Sigmoid colon (tissue), 7 donors: ENCODE measurements at regions of chrX and their contacts with region 1.

Region 1: DNA sequence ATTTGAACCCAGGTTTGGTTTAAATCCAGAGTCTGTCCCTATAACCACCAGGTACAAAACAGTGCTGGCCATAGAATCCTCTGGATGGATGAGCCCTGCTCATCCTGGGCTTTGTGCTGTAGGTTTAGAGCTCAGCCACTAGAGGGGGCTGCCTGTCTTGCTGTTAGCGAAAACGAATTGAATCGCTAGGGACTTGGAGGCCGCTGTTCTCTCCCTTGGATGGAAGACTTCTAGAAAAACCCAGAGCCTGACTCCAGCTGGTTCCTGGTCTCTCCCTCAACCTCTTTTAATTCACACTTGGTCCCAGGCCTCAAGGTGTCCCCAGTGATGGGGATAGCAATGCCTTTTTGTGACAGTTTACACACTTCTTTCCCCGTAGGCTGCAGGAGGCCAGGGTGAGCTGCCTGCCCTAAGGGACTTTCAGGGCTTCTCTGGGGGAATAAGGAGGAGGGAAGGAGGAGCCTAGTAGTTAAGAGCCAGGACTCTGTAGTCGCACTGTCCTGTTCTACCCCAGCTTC is 8.7 kb downstream of the RIPPLY1 start:
- DNase-seq: peak; percentile 78
- H3K4me3 ChIP-seq: no peak overlapping the region
- H3K27ac ChIP-seq: no peak overlapping the region
- H3K4me1 ChIP-seq: peaks cover 0 to 3% (median 0%) of the 10 kb centered on the region in 4 donors
- H3K27me3 ChIP-seq: no peaks in the 10 kb centered on the region
- CTCF ChIP-seq: peak; percentile 30 to 62 (median 48)
- EP300 ChIP-seq: no peak
- POLR2A ChIP-seq: no peak

Region 2: DNA sequence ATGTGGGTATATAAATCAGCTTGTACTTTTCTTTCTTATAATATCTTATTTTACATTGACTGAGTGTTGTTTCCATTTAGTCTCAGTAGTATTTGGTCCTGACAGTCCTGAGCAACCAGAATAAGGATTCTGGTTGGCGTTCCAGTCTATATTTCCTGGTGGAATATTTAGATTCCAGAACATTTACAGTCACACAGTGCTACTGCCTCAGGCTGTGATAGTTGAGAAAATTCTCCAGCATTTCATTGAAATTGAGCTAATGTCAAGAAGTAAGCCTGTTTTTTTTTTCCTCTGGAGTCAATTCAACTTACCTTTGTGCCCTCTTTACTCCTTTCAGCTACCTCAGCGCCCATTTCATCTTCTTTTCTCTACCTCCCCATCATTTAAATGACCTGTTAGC is 993.6 kb before region 1 on chrX:
- intact Hi-C with region 1: no loop called
- DNase-seq: no peak
- H3K4me3 ChIP-seq: no peak overlapping the region
- H3K27ac ChIP-seq: no peak overlapping the region
- H3K4me1 ChIP-seq: no peaks in the 10 kb centered on the region
- H3K27me3 ChIP-seq: no peaks in the 10 kb centered on the region
- CTCF ChIP-seq: no peak
- EP300 ChIP-seq: no peak
- POLR2A ChIP-seq: no peak

Region 3: DNA sequence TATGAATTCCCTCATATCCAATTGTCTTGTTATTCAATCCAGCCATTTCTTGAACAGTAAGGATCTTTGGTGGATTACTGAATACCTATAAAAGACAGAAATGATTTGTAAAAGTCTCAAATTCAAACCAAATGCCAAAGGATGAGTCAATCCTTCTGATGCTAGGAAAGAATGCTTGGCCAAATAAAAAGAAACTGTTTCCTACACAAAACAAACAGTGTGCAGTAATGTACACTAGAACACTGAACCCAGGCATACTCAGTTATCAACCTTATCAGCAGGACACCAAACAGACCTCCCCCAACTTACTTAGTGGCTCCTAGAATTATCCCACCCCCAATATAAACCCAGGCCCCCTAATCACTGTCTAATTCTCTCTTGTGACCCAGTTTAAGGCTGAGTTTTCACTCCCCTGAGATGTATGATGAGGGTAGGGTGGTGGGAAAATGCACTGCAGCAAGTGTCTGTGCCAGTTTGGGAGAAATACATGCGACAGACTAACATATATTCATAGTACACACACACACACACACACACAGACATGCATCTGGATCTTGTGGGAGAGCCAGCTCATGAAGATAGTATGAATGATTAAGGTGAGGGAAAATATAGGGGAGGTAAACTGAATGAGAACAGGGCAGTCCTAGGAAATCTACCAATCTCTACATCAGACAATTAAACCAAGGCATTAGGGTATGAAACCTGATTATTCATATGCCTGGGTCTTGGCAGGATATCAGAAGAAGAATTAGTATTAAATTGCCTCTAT is 60.7 kb after region 1 on chrX:
- intact Hi-C with region 1: loop called (anchors 2 kb)
- DNase-seq: no peak
- H3K4me3 ChIP-seq: no peak overlapping the region
- H3K27ac ChIP-seq: no peak overlapping the region
- H3K4me1 ChIP-seq: no peaks in the 10 kb centered on the region
- H3K27me3 ChIP-seq: no peaks in the 10 kb centered on the region
- CTCF ChIP-seq: no peak
- EP300 ChIP-seq: no peak
- POLR2A ChIP-seq: no peak

Region 4: GRCh38 chrX:106999002-106999975 is 104.8 kb after region 1 on chrX:
- intact Hi-C with region 1: no loop called
- DNase-seq: peak; percentile 76
- H3K4me3 ChIP-seq: peak overlapping the region; percentile 42 to 66 (median 62)
- H3K27ac ChIP-seq: peak overlapping the region; percentile 79 to 82 (median 81)
- H3K4me1 ChIP-seq: no peaks in the 10 kb centered on the region
- H3K27me3 ChIP-seq: no peaks in the 10 kb centered on the region
- CTCF ChIP-seq: peak in 3 of 4 experiments; percentile 9 to 39 (median 21)
- EP300 ChIP-seq: no peak
- POLR2A ChIP-seq: no peak